ENCODE measurements at regions of chr13 and their contacts with region 1.

Region 1: GRCh38 chr13:84917252-84917878 is 881.9 kb downstream of the SLITRK6 start:
- DNase-seq: no peak
- ATAC-seq: no peak

Region 2: DNA sequence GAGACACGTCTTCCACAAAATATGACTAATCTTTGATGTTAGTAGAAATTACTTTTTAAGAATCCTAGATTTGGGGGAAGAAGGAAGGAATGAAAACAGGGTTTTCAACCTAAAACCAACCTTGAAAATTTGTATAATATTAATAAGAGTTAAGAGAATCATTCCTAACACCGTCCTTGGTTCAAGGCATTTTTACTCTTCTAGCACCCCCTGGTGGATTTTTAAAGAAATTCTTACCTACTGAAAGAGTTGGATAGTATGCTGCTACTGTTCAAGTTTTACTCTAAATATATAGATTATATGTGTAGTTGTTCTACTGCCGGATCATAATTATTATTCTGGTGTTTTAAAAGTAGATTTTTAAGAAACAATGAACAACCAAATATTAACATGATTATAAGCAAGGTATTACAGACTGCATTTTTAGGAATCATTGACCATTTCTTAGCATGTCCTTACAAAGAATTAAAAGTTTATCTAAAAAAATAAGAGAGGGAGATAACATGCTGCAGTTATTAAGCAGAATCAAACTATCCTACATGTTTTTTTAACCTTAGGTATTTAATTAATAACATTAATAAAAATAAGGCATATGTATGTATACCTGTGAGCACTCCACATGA is 889.3 kb after region 1 on chr13:
- intact Hi-C with region 1: loop called (anchors 5 to 10 kb)
- DNase-seq: no peak
- ATAC-seq: peak in 1 of 2 donors; percentile 70

Measured in left cardiac atrium (tissue), 4 donors.